Esophagus muscularis mucosa (tissue), 4 donors: ENCODE measurements at regions of chr11 and their contacts with region 1.

Region 1: GRCh38 chr11:86244522-86245368 is at the start of gene EED:
- DNase-seq: peak; percentile 96
- H3K4me3 ChIP-seq: peak within 1 kb of the TSS; percentile 71 to 86 (median 83)
- H3K27ac ChIP-seq: peak within 1 kb of the TSS; percentile 97 to 99 (median 99)
- H3K4me1 ChIP-seq: peaks cover 18 to 45% (median 33%) of the 10 kb centered on the region in 4 donors
- H3K27me3 ChIP-seq: no peaks in the 10 kb centered on the region
- CTCF ChIP-seq: peak in 1 of 3 experiments; percentile 12
- EP300 ChIP-seq: no peak
- POLR2A ChIP-seq: no peak
- total RNA-seq, gene EED: 11.1 to 14.7 (median 13.4) TPM

Region 2: DNA sequence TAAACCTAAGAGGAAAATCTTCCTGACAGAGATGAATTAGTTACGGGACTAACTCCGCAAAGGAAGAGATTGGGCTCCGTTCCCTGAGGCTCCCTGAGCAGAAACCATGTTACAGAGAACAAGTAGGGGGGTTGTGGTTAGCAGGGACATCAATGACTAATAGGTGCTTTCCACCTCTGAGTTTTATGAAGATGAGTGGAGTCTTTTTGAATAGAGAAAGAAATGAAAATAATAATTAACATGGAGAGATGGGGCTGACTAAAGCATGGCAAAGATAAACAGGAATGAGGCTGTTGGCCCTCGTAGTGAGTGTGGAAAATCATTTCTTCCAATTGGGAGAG is 128.4 kb before region 1 on chr11:
- intact Hi-C with region 1: no loop called
- DNase-seq: no peak
- H3K4me3 ChIP-seq: no peak overlapping the region
- H3K27ac ChIP-seq: peak overlapping the region; percentile 25 to 71 (median 44)
- H3K4me1 ChIP-seq: peaks cover 0 to 44% (median 39%) of the 10 kb centered on the region in 4 donors
- H3K27me3 ChIP-seq: no peaks in the 10 kb centered on the region
- CTCF ChIP-seq: no peak
- EP300 ChIP-seq: no peak
- POLR2A ChIP-seq: no peak

Region 3: DNA sequence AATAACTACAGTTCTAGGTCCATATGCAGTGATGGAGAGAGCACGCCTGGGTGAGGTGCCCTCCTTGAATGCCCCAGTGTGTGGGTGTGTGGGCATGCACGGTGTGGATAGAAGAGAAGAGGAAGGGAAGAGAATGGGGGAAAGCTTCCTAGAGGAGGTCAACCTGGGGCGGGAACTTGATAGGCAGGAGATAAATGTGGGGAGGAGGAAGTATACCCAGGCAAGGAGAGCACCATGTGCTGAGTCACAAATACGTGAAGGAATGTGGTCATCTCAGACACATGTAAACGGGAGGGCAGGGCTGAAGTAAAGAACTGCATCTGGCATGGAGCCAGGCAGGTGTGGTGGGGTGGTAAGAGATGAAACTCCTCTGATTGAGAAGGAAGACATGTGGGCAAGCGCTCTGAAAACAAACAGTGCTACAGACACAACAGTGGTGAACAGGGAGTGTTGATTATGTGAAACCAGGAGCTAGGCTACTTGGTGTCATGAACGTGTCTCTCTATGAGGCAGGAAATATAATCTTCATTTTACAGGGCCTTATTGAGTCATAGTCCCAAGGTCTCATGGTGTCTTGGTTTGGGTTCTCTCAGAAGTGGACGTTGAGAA is 61.7 kb before region 1 on chr11:
- intact Hi-C with region 1: no loop called
- DNase-seq: no peak
- H3K4me3 ChIP-seq: no peak overlapping the region
- H3K27ac ChIP-seq: no peak overlapping the region
- H3K4me1 ChIP-seq: peaks cover 0 to 16% (median 6%) of the 10 kb centered on the region in 4 donors
- H3K27me3 ChIP-seq: no peaks in the 10 kb centered on the region
- CTCF ChIP-seq: no peak
- EP300 ChIP-seq: no peak
- POLR2A ChIP-seq: no peak

Region 4: GRCh38 chr11:86255896-86256295 is 11.2 kb after region 1 on chr11:
- intact Hi-C with region 1: no loop called
- DNase-seq: no peak
- H3K4me3 ChIP-seq: no peak overlapping the region
- H3K27ac ChIP-seq: no peak overlapping the region
- H3K4me1 ChIP-seq: peaks cover 0 to 16% (median 3%) of the 10 kb centered on the region in 4 donors
- H3K27me3 ChIP-seq: no peaks in the 10 kb centered on the region
- CTCF ChIP-seq: no peak
- EP300 ChIP-seq: no peak
- POLR2A ChIP-seq: no peak

Region 5: GRCh38 chr11:86302100-86302793 is 57.5 kb after region 1 on chr11 and contains the start of gene HIKESHI:
- intact Hi-C with region 1: loop called (anchors 5 kb)
- DNase-seq: peak; percentile 99
- H3K4me3 ChIP-seq: peak within 1 kb of the TSS; percentile 81 to 95 (median 84)
- H3K27ac ChIP-seq: peak within 1 kb of the TSS; percentile 85 to 89 (median 88)
- H3K4me1 ChIP-seq: peaks cover 15 to 33% (median 23%) of the 10 kb centered on the region in 4 donors
- H3K27me3 ChIP-seq: no peaks in the 10 kb centered on the region
- CTCF ChIP-seq: peak in 1 of 3 experiments; percentile 29
- EP300 ChIP-seq: no peak
- POLR2A ChIP-seq: no peak
- total RNA-seq, gene HIKESHI: 37.1 to 52.7 (median 41.2) TPM